Activated naive CD4-positive, alpha-beta T cell treated with anti-CD3 and anti-CD28 coated beads, Interleukin-2, amount 10 ng/mL, durations not matched to agents 7 days and 5 days (primary cell): ENCODE measurements at regions of chr3 and their contacts with region 1.

Region 1: GRCh38 chr3:157606011-157606851 is 103.0 kb upstream of the VEPH1 start:
- DNase-seq: peak; percentile 70
- H3K4me3 Mint-ChIP-seq: no peak overlapping the region
- H3K27ac Mint-ChIP-seq: no peak overlapping the region
- H3K4me1 Mint-ChIP-seq: peaks cover 2% of the 10 kb centered on the region
- H3K27me3 Mint-ChIP-seq: peaks cover 22% of the 10 kb centered on the region

Region 2: DNA sequence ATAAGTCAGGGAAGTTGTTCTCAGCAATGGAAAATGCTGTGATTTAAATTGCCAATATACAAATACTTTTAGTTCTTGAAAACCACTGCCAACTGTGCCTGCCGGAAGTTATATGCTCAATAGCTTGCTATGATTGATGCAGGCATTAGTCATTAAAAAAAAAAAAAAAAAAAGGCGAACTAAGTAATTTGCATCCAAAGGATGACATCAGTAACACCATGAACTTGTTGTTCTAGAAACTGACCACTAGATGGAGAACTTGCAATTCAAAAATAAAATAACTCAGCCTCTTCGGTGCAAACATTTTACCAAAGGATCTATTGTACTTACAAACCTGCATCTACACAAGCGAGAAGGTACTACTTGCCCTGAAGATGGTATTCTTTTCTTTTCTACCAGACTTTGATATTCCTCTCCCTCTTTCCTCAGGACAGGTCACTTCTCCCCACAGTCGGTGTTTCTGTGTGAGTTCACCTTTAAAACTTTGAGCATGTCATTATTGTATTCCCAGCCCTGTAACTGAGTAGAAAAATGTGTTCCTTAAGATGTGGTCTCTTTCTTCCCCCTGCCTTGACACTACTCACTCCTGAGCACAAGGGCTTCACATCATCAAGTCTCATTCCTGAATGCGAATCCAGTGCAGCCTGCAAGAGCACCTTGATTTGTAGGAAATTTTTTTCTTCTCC is 12.0 kb after region 1 on chr3:
- CTCF ChIA-PET with region 1: interaction called, 16 read pairs
- DNase-seq: no peak
- H3K4me3 Mint-ChIP-seq: no peak overlapping the region
- H3K27ac Mint-ChIP-seq: no peak overlapping the region
- H3K4me1 Mint-ChIP-seq: no peaks in the 10 kb centered on the region
- H3K27me3 Mint-ChIP-seq: no peaks in the 10 kb centered on the region

Region 3: GRCh38 chr3:158434412-158435038 is 828.3 kb after region 1 on chr3:
- CTCF ChIA-PET with region 1: interaction called, 12 read pairs
- DNase-seq: peak; percentile 45
- H3K4me3 Mint-ChIP-seq: no peak overlapping the region
- H3K27ac Mint-ChIP-seq: no peak overlapping the region
- H3K4me1 Mint-ChIP-seq: no peaks in the 10 kb centered on the region
- H3K27me3 Mint-ChIP-seq: no peaks in the 10 kb centered on the region